ENCODE measurements at regions of chr12 and their contacts with region 1.

Region 1: GRCh38 chr12:124010687-124011086 is 37.7 kb downstream of the ZNF664 start:
- DNase-seq: no peak
- H3K4me3 ChIP-seq: no peak overlapping the region
- H3K27ac ChIP-seq: no peak overlapping the region
- H3K4me1 ChIP-seq: peaks cover 6% of the 10 kb centered on the region
- H3K27me3 ChIP-seq: no peaks in the 10 kb centered on the region
- CTCF ChIP-seq: no peak
- POLR2A ChIP-seq: no peak

Region 2: GRCh38 chr12:123961585-123962345 is 48.9 kb before region 1 on chr12:
- intact Hi-C with region 1: loop called (anchors 2 kb)
- DNase-seq: no peak
- H3K4me3 ChIP-seq: no peak overlapping the region
- H3K27ac ChIP-seq: no peak overlapping the region
- H3K4me1 ChIP-seq: no peaks in the 10 kb centered on the region
- H3K27me3 ChIP-seq: no peaks in the 10 kb centered on the region
- CTCF ChIP-seq: no peak
- POLR2A ChIP-seq: no peak

Measured in vagina (tissue), 2 donors.